ENCODE measurements at regions of chr13 and their contacts with region 1.

Region 1: DNA sequence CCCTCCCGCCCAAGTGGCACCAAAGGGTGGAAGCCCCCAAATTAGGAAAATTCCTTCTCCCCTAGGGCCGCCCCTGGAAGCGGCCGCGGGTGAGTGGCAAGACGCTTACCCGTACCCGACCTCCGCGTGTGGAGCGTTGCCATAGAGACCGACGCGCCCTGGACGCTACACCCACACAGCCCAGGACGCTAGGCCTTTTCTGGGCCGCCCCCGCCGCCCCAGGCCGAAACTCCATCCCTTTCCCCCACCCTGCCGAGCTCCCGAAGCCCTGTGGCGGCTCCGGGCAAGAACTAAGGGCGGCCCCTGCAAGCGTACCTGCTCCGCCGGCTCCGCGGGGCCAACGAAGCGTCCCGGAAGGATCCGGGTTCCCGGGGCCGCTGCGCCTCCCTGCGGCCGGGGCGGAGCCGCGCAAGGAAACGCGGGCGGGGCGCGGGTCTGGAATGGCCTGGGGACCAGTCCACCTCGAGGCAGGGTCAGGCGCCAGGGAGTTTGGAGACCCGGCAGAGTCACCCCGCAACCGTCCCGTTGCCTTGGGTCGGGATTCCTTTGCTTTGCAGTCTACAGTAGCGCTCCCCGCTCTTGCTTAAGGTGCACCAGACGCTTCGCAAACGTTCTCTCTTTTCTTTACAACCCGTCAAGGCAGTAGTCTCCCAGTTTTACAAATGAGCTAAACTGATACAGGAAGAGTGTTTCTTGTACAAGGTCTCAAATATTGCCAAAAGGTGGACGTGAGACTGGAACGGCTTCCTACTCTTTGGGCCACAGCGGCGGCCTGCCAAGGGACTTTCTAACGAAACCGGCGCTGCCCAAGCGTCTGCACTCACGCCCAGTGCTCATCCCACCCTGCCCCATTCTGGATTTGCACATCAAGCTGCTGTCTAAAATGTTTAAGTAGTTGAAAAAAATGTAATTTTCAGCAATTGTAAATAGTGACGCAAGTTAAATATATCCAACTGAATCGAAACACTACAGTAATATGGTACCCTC is at the start of gene NEK5:
- DNase-seq: no peak
- H3K4me3 ChIP-seq: peak within 1 kb of the TSS; percentile 51 to 69 (median 66)
- H3K27ac ChIP-seq: peak within 1 kb of the TSS in 3 of 4 donors; percentile 1 to 51 (median 16)
- H3K4me1 ChIP-seq: peaks cover 4 to 24% (median 11%) of the 10 kb centered on the region in 3 donors
- H3K27me3 ChIP-seq: no peaks in the 10 kb centered on the region
- CTCF ChIP-seq: peak; percentile 45 to 80 (median 69)
- POLR2A ChIP-seq: no peak
- total RNA-seq, gene NEK5: 0.18 to 0.38 TPM in 2 of 4 donors, not detected in the others

Region 2: GRCh38 chr13:51814825-51815650 is 314.0 kb before region 1 on chr13:
- intact Hi-C with region 1: loop called (anchors 5 kb)
- DNase-seq: no peak
- H3K4me3 ChIP-seq: peak overlapping the region in 2 of 4 donors; percentile 3 to 47
- H3K27ac ChIP-seq: no peak overlapping the region
- H3K4me1 ChIP-seq: peaks cover 0 to 36% (median 6%) of the 10 kb centered on the region in 3 donors
- H3K27me3 ChIP-seq: peaks cover 0 to 32% (median 0%) of the 10 kb centered on the region in 4 donors
- CTCF ChIP-seq: peak; percentile 52 to 84 (median 80)
- POLR2A ChIP-seq: no peak

Region 3: GRCh38 chr13:51895906-51896888 is 232.8 kb before region 1 on chr13:
- intact Hi-C with region 1: loop called (anchors 10 kb)
- DNase-seq: no peak
- H3K4me3 ChIP-seq: no peak overlapping the region
- H3K27ac ChIP-seq: no peak overlapping the region
- H3K4me1 ChIP-seq: no peaks in the 10 kb centered on the region
- H3K27me3 ChIP-seq: peaks cover 0 to 55% (median 0%) of the 10 kb centered on the region in 4 donors
- CTCF ChIP-seq: peak in 5 of 6 experiments; percentile 35 to 67 (median 48)
- POLR2A ChIP-seq: no peak

Region 4: DNA sequence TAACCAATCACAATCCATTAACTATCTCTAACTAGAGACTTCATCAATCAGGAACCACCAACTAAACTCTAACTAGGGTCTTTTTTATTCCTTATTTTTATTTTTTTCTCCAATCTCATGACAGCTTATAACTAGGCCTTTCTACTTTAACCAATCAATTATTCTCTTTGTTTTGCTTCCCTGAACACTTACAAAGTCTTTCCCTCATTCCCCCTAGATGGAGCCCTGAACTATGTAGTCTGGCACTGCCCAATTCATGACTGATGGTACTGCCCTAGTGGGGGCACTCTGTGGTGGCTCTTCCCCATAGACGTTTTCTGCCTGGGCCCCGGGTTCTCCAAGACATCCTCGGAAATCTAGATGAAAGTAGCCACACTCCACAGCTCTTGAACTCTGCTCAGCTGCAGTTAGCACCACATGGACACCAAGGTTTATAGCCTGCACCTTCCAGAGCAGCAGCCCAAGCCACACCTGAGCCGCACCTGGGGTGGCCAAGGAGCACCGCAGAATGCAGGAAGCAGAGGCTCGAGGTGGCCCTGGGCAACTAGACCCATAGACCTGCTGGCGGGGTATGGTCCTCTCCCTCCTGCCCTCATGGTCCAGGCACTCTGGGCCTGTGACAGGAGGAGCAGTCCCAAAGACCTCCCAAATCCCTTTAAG is 124.4 kb before region 1 on chr13:
- intact Hi-C with region 1: loop called (anchors 5 kb)
- DNase-seq: no peak
- H3K4me3 ChIP-seq: no peak overlapping the region
- H3K27ac ChIP-seq: no peak overlapping the region
- H3K4me1 ChIP-seq: peaks cover 0 to 6% (median 2%) of the 10 kb centered on the region in 3 donors
- H3K27me3 ChIP-seq: peaks cover 0 to 15% (median 0%) of the 10 kb centered on the region in 4 donors
- CTCF ChIP-seq: no peak
- POLR2A ChIP-seq: no peak

Region 5: GRCh38 chr13:52070929-52071523 is 58.0 kb before region 1 on chr13:
- intact Hi-C with region 1: no loop called
- DNase-seq: no peak
- H3K4me3 ChIP-seq: no peak overlapping the region
- H3K27ac ChIP-seq: no peak overlapping the region
- H3K4me1 ChIP-seq: no peaks in the 10 kb centered on the region
- H3K27me3 ChIP-seq: no peaks in the 10 kb centered on the region
- CTCF ChIP-seq: no peak
- POLR2A ChIP-seq: no peak

Region 6: DNA sequence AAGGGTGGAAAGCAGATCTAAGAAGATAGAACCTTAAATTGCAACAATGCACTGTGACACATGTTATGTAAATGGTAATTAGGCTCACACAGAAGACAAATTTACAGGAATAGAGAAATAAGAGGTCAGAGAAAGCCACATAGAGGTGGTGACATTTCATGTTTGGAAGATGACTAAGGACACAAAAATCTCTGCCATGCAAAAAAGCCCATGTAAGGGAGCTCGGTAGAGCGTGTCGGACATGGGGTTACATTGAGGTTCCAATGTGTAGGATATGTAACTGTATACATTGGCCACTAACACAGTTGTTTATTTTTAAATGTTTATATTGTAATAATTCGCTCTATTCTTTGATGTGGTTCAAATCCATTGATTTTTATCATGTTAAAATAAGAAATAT is 557.4 kb after region 1 on chr13:
- intact Hi-C with region 1: no loop called
- DNase-seq: no peak
- H3K4me3 ChIP-seq: no peak overlapping the region
- H3K27ac ChIP-seq: no peak overlapping the region
- H3K4me1 ChIP-seq: no peaks in the 10 kb centered on the region
- H3K27me3 ChIP-seq: no peaks in the 10 kb centered on the region
- CTCF ChIP-seq: no peak
- POLR2A ChIP-seq: no peak

Measured in esophagus squamous epithelium (tissue), 5 donors.